WTC11 (cell line): ENCODE measurements at regions of chr3 and their contacts with region 1.

Region 1: GRCh38 chr3:187319699-187320302 is 28.3 kb upstream of the MASP1 start:
- DNase-seq: peak; percentile 90
- ATAC-seq: peak; percentile 96
- H3K4me3 Mint-ChIP-seq: no peak overlapping the region
- H3K27ac Mint-ChIP-seq: no peak overlapping the region
- H3K4me1 Mint-ChIP-seq: peaks cover 27% of the 10 kb centered on the region
- H3K27me3 Mint-ChIP-seq: no peaks in the 10 kb centered on the region
- CTCF ChIP-seq: peak; percentile 99

Region 2: DNA sequence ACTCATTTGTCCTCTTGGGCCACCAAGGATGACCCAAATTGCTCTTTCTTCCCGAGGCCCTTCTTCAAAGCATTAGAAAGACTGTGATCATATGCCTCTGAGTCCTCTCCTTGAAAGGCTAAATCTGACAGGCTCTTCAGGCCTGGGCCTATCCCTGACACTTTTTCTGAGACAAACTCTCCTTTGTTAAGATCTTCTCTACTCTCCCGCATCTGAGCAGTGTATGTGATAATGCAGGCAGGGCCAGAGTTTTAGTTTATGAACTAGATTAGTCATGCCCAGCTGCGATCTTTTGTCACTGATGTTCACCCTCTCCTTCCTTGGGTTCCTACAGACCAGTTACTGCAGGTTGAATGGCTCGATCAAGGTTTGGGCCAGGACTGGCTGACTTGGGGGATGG is 67.5 kb before region 1 on chr3:
- CTCF ChIA-PET with region 1: interaction called, 11 read pairs
- POLR2A ChIA-PET with region 1: no interaction called
- DNase-seq: no peak
- ATAC-seq: no peak
- H3K4me3 Mint-ChIP-seq: no peak overlapping the region
- H3K27ac Mint-ChIP-seq: no peak overlapping the region
- H3K4me1 Mint-ChIP-seq: peaks cover 24% of the 10 kb centered on the region
- H3K27me3 Mint-ChIP-seq: no peaks in the 10 kb centered on the region; the same call in 1 of the 2 replicates
- CTCF ChIP-seq: no peak

Region 3: DNA sequence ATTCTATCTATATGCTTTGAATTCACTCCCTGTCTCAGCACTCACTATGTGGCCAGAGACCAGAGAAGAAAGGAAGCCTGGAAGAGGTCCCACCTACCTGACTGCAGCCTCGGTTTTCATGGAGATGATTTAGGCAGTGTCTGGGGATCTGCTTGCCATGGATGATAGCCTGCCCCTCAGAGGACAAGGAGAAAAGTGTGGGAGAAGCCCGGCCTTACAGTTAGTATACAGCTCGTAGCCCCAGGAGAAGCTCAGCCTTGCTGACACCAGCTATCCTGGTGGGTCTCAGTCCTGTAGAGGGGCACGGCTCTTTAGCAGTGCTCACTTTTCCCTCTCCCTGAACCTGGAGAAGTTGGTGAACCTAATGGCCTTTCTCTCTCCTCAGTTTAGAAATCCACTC is 22.5 kb after region 1 on chr3:
- CTCF ChIA-PET with region 1: interaction called, 12 read pairs
- POLR2A ChIA-PET with region 1: no interaction called
- DNase-seq: no peak
- ATAC-seq: peak; percentile 93
- H3K4me3 Mint-ChIP-seq: no peak overlapping the region
- H3K27ac Mint-ChIP-seq: no peak overlapping the region
- H3K4me1 Mint-ChIP-seq: peaks cover 19% of the 10 kb centered on the region
- H3K27me3 Mint-ChIP-seq: no peaks in the 10 kb centered on the region
- CTCF ChIP-seq: no peak

Region 4: DNA sequence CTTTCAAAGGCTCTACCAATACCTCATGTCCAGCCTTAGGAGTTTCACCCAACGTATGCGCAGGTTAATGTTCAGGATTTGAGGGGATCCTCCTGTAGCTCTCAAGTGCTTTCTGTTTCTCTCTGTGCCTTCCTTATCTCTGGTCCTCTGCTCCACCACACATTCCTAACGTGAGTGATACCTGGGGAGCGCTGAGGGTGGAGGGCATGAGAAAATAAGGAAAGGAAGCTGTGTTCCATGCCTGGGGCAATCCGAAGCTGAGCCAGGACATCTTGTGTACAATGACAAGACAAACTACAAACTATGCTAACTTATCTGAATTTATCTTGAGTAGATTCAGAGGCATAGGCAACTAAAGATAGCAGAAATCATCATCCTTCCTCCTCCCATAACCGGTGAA is 214.0 kb after region 1 on chr3:
- CTCF ChIA-PET with region 1: interaction called, 10 read pairs
- POLR2A ChIA-PET with region 1: no interaction called
- DNase-seq: no peak
- ATAC-seq: peak; percentile 76
- H3K4me3 Mint-ChIP-seq: no peak overlapping the region
- H3K27ac Mint-ChIP-seq: no peak overlapping the region
- H3K4me1 Mint-ChIP-seq: peaks cover 12% of the 10 kb centered on the region
- H3K27me3 Mint-ChIP-seq: no peaks in the 10 kb centered on the region
- CTCF ChIP-seq: no peak

Region 5: DNA sequence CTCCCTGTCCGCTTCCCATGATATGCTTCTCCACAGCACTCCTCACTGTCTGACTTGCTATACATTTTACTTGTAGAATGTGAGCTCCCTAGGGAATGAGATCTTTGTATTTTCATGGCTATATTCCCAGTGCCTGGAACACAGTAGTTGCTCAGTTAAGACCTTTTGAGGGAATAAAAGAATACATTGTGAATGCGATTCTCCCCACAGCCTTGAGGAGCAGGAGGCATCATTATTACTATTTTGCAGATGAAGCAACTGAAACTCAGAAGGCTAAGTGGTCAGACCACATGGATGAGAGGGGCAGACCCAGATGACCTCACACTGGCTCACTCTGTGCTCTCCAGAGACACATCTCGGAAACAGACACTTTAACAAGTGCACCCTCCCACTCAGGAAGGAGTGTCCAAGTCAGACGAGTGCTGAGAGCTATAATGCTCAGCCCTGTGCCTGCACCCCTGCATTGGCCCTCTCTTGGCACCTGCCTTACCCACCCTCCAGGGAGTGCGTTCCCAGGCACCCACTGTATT is 303.5 kb after region 1 on chr3:
- CTCF ChIA-PET with region 1: interaction called, 14 read pairs
- POLR2A ChIA-PET with region 1: no interaction called
- DNase-seq: no peak
- ATAC-seq: no peak
- H3K4me3 Mint-ChIP-seq: no peak overlapping the region
- H3K27ac Mint-ChIP-seq: no peak overlapping the region
- H3K4me1 Mint-ChIP-seq: peaks cover 51% of the 10 kb centered on the region
- H3K27me3 Mint-ChIP-seq: peaks cover 99% of the 10 kb centered on the region
- CTCF ChIP-seq: no peak

Region 6: GRCh38 chr3:187702507-187703033 is 382.8 kb after region 1 on chr3 and contains the start of gene RTP2:
- CTCF ChIA-PET with region 1: interaction called, 11 read pairs
- POLR2A ChIA-PET with region 1: no interaction called
- DNase-seq: no peak
- ATAC-seq: no peak
- H3K4me3 Mint-ChIP-seq: no peak within 1 kb of the TSS
- H3K27ac Mint-ChIP-seq: no peak within 1 kb of the TSS
- H3K4me1 Mint-ChIP-seq: no peaks in the 10 kb centered on the region
- H3K27me3 Mint-ChIP-seq: no peaks in the 10 kb centered on the region
- CTCF ChIP-seq: no peak
- total RNA-seq, gene RTP2: not detected in 3 replicates

Region 7: DNA sequence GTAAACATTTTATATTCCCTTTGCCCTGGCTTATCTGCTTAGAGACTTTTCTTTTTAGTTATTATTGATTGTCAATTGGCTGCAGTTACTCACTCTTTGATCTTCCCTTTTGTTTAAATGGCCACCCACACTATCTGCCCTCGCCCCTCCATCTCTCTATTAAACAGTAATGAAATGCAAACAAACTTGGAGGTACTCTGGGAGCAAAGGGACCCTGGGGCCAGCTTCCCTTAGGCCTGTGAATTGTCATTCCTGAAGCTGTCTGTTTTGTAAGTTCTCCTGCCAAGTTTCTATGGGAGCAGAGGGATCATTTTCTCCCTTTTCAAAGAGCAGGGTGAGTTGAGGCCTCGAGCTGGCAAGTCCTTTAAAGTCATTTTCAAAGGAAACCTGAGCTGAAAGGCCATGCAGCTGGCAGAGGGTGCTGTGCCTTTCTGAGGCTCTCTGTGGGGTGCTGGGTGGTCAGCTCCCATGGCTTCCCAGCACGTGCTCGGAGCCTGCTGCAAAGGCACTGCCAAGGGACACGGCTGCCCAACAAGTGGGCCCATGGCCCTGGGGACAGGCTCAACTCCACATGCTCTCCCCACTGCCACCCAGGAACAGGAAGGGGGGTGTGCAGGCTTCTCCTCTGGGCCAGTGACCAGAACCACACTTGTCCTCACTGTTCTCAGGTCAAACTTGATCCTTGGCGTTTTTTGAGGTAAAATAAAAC is 400.0 kb after region 1 on chr3:
- CTCF ChIA-PET with region 1: interaction called, 36 read pairs
- POLR2A ChIA-PET with region 1: no interaction called
- DNase-seq: no peak
- ATAC-seq: no peak
- H3K4me3 Mint-ChIP-seq: no peak overlapping the region
- H3K27ac Mint-ChIP-seq: peak overlapping the region; percentile 1; the same call in 1 of the 2 replicates
- H3K4me1 Mint-ChIP-seq: peaks cover 27% of the 10 kb centered on the region
- H3K27me3 Mint-ChIP-seq: peaks cover 9% of the 10 kb centered on the region; the same call in 1 of the 2 replicates
- CTCF ChIP-seq: no peak